ENCODE measurements at regions of chr3 and their contacts with region 1.

Region 1: GRCh38 chr3:25156626-25157025 is 271.4 kb upstream of the RARB start:
- DNase-seq: no peak

Region 2: DNA sequence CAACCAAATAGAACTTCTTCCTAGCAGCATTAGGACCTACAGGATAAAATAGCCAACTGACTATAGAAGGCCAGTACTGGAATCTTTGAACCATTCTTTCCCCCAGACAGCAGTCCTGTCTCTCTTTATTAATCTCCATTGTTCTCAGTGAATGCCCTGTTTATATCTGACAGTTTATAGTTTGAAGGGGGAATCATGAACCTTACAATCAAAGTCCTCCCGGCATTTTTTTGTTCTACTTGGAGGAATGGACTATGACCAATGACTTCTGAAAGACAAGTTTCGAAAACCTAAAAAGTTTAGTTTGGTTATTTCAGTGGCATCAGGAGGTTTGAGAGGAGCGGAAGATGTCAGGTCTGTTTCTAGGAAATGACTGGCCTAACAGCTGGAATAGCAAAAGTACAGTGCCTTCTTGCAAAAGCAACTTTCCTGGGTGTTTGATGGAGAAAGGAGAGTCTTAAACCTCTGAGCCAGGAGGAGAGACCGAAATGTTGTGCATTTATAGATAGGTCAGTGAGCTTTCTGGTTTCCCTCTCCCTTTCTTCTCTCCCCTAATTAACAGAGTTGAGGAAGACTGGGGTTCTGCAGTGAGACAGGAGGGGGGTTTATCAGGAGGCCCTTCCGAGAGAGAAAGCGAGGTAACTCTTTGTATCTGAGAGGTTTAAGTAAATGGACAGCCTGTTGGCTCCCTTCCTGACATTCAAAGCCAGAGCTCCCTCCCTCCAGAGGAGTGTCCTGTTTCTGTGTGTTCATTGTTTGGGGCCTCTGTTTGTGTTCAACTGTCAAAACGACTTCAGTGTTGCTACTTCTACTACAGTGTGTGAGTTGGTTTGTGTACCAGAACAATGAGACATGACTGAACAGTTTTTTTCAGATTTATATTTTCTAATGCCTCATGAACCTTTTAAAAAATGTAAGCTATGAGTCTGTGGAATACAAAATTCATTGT is 111.6 kb before region 1 on chr3:
- intact Hi-C with region 1: no loop called
- DNase-seq: no peak

Region 3: GRCh38 chr3:25433868-25434267 is 277.2 kb after region 1 on chr3:
- intact Hi-C with region 1: loop called in 1 of 2 experiments (anchors 10 kb)
- DNase-seq: no peak

Measured in posterior vena cava (tissue), 2 donors.